Heart left ventricle (tissue), 16 donors: ENCODE measurements at regions of chr18 and their contacts with region 1.

Region 1: GRCh38 chr18:3869848-3870247 is 419.9 kb downstream of the TGIF1 start:
- DNase-seq: no peak
- ATAC-seq: peak in 3 of 4 donors; percentile 67 to 76 (median 70)
- H3K4me3 ChIP-seq: no peak overlapping the region
- H3K27ac ChIP-seq: no peak overlapping the region
- H3K4me1 ChIP-seq: peaks cover 0 to 17% (median 3%) of the 10 kb centered on the region in 12 donors
- H3K27me3 ChIP-seq: no peaks in the 10 kb centered on the region
- CTCF ChIP-seq: peak in 10 of 12 donors; percentile 15 to 60 (median 48)
- POLR2A ChIP-seq: no peak

Region 2: DNA sequence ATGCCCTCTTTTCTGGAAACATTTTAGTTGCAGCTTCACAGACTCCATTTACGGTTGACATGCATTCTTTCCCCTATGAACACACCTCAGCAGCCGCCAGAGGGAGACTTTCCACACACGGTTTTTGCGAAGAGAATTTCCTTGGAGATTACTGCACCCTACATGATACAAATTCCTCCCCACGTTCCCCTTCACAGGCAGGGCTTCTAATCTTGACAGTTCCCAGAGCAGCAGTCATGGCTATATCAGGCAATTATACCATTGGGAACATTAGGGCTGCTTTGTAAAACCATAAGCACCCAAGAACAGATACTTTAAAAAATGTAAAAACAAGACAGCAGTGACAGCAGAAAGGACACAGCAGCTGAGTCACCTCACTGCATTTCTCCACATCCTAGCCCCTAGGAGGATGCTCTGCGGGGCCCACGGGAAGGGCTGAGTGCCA is 166.1 kb before region 1 on chr18:
- intact Hi-C with region 1: loop called in 6 of 10 experiments (anchors 5 to 10 kb)
- DNase-seq: peak in 4 of 5 donors; percentile 60 to 70 (median 64)
- ATAC-seq: peak; percentile 75 to 89 (median 85)
- H3K4me3 ChIP-seq: peak overlapping the region in 3 of 12 donors; percentile 7 to 37 (median 22)
- H3K27ac ChIP-seq: peak overlapping the region in 2 of 12 donors; percentile 32 to 54
- H3K4me1 ChIP-seq: peaks cover 0 to 24% (median 6%) of the 10 kb centered on the region in 12 donors
- H3K27me3 ChIP-seq: no peaks in the 10 kb centered on the region
- CTCF ChIP-seq: peak; percentile 41 to 76 (median 65)
- POLR2A ChIP-seq: no peak

Region 3: GRCh38 chr18:3923750-3924149 is 53.9 kb after region 1 on chr18:
- intact Hi-C with region 1: loop called in 1 of 10 experiments (anchors 5 kb)
- DNase-seq: no peak
- ATAC-seq: no peak
- H3K4me3 ChIP-seq: no peak overlapping the region
- H3K27ac ChIP-seq: no peak overlapping the region
- H3K4me1 ChIP-seq: peaks cover 0 to 28% (median 6%) of the 10 kb centered on the region in 12 donors
- H3K27me3 ChIP-seq: no peaks in the 10 kb centered on the region
- CTCF ChIP-seq: no peak
- POLR2A ChIP-seq: no peak

Region 4: GRCh38 chr18:3983351-3983969 is 113.6 kb after region 1 on chr18:
- intact Hi-C with region 1: loop called in 1 of 10 experiments (anchors 10 kb)
- DNase-seq: no peak
- ATAC-seq: no peak
- H3K4me3 ChIP-seq: no peak overlapping the region
- H3K27ac ChIP-seq: no peak overlapping the region
- H3K4me1 ChIP-seq: peaks cover 0 to 9% (median 0%) of the 10 kb centered on the region in 12 donors
- H3K27me3 ChIP-seq: no peaks in the 10 kb centered on the region
- CTCF ChIP-seq: no peak
- POLR2A ChIP-seq: no peak

Region 5: GRCh38 chr18:4004183-4004829 is 134.5 kb after region 1 on chr18:
- intact Hi-C with region 1: loop called in 5 of 10 experiments (anchors 5 to 10 kb)
- DNase-seq: no peak
- ATAC-seq: no peak
- H3K4me3 ChIP-seq: no peak overlapping the region
- H3K27ac ChIP-seq: no peak overlapping the region
- H3K4me1 ChIP-seq: no peaks in the 10 kb centered on the region
- H3K27me3 ChIP-seq: no peaks in the 10 kb centered on the region
- CTCF ChIP-seq: no peak
- POLR2A ChIP-seq: no peak

Region 6: GRCh38 chr18:4024702-4025101 is 154.9 kb after region 1 on chr18:
- intact Hi-C with region 1: no loop called
- DNase-seq: no peak
- ATAC-seq: no peak
- H3K4me3 ChIP-seq: no peak overlapping the region
- H3K27ac ChIP-seq: no peak overlapping the region
- H3K4me1 ChIP-seq: no peaks in the 10 kb centered on the region
- H3K27me3 ChIP-seq: no peaks in the 10 kb centered on the region
- CTCF ChIP-seq: no peak
- POLR2A ChIP-seq: no peak